BJ (cell line): ENCODE measurements at regions of chr1 and their contacts with region 1.

Region 1: DNA sequence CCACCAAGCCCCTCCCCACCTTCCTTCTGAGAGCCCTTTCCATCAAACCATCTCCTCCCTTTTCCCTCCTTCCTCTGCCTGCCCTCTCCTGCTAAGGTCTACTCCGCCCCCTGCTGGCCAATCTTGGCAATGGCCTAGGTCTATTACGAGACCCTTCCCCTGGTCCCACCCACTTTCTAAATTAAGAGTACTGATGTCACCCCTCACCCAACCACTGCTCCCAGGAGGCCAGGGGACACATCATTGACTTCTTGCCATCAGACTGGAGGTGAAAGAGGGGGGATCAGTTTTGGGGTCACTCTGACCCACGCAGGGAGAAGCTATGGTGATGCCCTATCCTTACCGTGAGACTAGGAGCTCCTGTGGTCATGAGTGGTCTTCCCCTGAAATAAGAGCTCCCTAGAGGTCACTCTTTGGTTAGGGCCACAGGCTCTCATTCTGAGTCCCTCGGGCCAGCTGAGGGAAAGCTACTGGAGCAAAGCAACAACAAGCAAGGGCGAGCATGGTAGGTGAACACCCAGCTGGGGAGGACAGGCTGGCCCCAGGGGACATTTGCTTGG is 34.6 kb upstream of the S100A7 start:
- DNase-seq: no peak
- H3K4me3 ChIP-seq: no peak overlapping the region
- H3K27me3 ChIP-seq: peaks cover 13% of the 10 kb centered on the region
- CTCF ChIP-seq: peak; percentile 97

Region 2: DNA sequence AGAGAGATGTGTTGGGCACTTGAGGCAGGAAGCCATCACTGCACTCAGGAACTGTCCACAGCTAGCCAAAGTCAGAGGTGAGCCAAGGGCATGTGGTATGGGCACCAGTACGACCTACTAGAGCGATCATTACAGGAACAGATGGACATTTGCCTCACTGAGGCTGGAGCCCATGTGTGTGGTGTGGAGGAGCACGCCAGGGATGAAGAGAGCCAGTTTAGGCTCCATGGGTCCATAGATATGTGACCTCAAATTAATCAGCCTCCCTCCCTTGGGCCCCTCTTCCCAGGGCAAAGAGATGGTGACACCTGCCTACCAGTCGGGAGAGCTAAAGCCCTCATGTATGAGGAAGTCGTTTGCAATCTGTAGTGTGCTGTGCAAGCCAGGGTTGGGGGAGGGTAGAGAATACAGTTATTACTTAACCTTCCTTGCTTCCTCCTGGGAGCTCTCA is 150.5 kb before region 1 on chr1:
- CTCF ChIA-PET with region 1: interaction called, 404 read pairs
- POLR2A ChIA-PET with region 1: no interaction called
- DNase-seq: no peak
- H3K4me3 ChIP-seq: no peak overlapping the region
- H3K27me3 ChIP-seq: peaks cover 3% of the 10 kb centered on the region; the same call in 1 of the 2 replicates
- CTCF ChIP-seq: no peak

Region 3: GRCh38 chr1:153352523-153352922 is 142.5 kb before region 1 on chr1:
- CTCF ChIA-PET with region 1: interaction called, 404 read pairs
- POLR2A ChIA-PET with region 1: no interaction called
- DNase-seq: no peak
- H3K4me3 ChIP-seq: no peak overlapping the region
- H3K27me3 ChIP-seq: peaks cover 6% of the 10 kb centered on the region; the same call in 1 of the 2 replicates
- CTCF ChIP-seq: peak; percentile 80

Region 4: DNA sequence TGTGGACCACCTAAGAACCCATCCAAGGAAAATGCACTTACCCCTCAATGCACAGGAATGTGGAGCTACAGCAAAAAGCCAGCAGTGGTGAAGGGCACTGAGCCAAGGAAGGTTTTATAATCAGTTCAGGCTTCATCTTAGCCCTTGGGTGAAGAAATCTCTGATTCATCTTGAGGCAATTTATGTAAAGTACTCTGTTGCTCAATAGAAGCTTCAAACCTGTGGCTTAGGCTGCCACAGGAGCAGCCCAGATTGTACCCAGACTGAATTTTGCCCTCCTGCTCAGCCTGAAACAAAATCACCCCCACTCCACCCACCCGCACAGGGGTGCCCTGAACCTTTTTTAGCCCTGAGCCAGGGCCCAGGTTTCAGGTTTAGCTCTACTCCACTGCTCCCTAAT is 119.5 kb before region 1 on chr1 and contains the start of gene S100A12:
- CTCF ChIA-PET with region 1: interaction called, 14 read pairs
- POLR2A ChIA-PET with region 1: no interaction called
- DNase-seq: peak; percentile 22
- H3K4me3 ChIP-seq: no peak within 1 kb of the TSS
- H3K27me3 ChIP-seq: peaks cover 6% of the 10 kb centered on the region
- CTCF ChIP-seq: no peak
- polyA plus RNA-seq, gene S100A12: not detected in 2 replicates

Region 5: GRCh38 chr1:153400244-153400643 is 94.8 kb before region 1 on chr1:
- CTCF ChIA-PET with region 1: interaction called, 15 read pairs
- POLR2A ChIA-PET with region 1: no interaction called
- DNase-seq: no peak
- H3K4me3 ChIP-seq: no peak overlapping the region
- H3K27me3 ChIP-seq: no peaks in the 10 kb centered on the region
- CTCF ChIP-seq: peak; percentile 13; the same call in 1 of the 2 replicates

Region 6: GRCh38 chr1:153465811-153466636 is 29.0 kb before region 1 on chr1:
- CTCF ChIA-PET with region 1: interaction called, 60 read pairs
- POLR2A ChIA-PET with region 1: no interaction called
- DNase-seq: no peak
- H3K4me3 ChIP-seq: no peak overlapping the region
- H3K27me3 ChIP-seq: peaks cover 2% of the 10 kb centered on the region; the same call in 1 of the 2 replicates
- CTCF ChIP-seq: peak; percentile 82

Region 7: GRCh38 chr1:153510984-153511410 is 15.9 kb after region 1 on chr1:
- CTCF ChIA-PET with region 1: interaction called, 67 read pairs
- POLR2A ChIA-PET with region 1: no interaction called
- DNase-seq: no peak
- H3K4me3 ChIP-seq: no peak overlapping the region
- H3K27me3 ChIP-seq: no peaks in the 10 kb centered on the region
- CTCF ChIP-seq: peak; percentile 97